ENCODE measurements at regions of chr1 and their contacts with region 1.

Region 1: GRCh38 chr1:246506674-246507481 is at the start of gene SMYD3:
- DNase-seq: peak; percentile 56 to 92 (median 75)
- ATAC-seq: peak; percentile 88
- H3K4me3 ChIP-seq: peak within 1 kb of the TSS; percentile 77 to 92
- H3K4me3 Mint-ChIP-seq: peak within 1 kb of the TSS; percentile 88
- H3K27ac ChIP-seq: peak within 1 kb of the TSS; percentile 56 to 59
- H3K27ac Mint-ChIP-seq: peak within 1 kb of the TSS; percentile 85
- H3K4me1 ChIP-seq: peaks cover 13% of the 10 kb centered on the region
- H3K4me1 Mint-ChIP-seq: peaks cover 35% of the 10 kb centered on the region
- H3K27me3 ChIP-seq: no peaks in the 10 kb centered on the region
- H3K27me3 Mint-ChIP-seq: no peaks in the 10 kb centered on the region
- CTCF ChIP-seq: no peak
- total RNA-seq, gene SMYD3: 20.5 to 21.2 TPM

Region 2: GRCh38 chr1:246117066-246117791 is 389.6 kb before region 1 on chr1:
- CTCF ChIA-PET with region 1: no interaction called
- POLR2A ChIA-PET with region 1: no interaction called
- intact Hi-C with region 1: loop called in 1 of 2 experiments (anchors 5 kb)
- DNase-seq: peak; percentile 9 to 77 (median 42)
- ATAC-seq: peak; percentile 91
- H3K4me3 ChIP-seq: no peak overlapping the region
- H3K4me3 Mint-ChIP-seq: peak overlapping the region; percentile 56
- H3K27ac ChIP-seq: peak overlapping the region in 1 of 2 experiments; percentile 41
- H3K27ac Mint-ChIP-seq: peak overlapping the region; percentile 82
- H3K4me1 ChIP-seq: peaks cover 14% of the 10 kb centered on the region
- H3K4me1 Mint-ChIP-seq: peaks cover 32% of the 10 kb centered on the region
- H3K27me3 ChIP-seq: no peaks in the 10 kb centered on the region
- H3K27me3 Mint-ChIP-seq: no peaks in the 10 kb centered on the region
- CTCF ChIP-seq: peak; percentile 52

Region 3: GRCh38 chr1:246724016-246724730 is 217.3 kb after region 1 on chr1 and contains the start of gene SCCPDH:
- CTCF ChIA-PET with region 1: no interaction called
- POLR2A ChIA-PET with region 1: no interaction called
- intact Hi-C with region 1: loop called in 1 of 2 experiments (anchors 1 kb)
- DNase-seq: peak; percentile 39 to 83 (median 70)
- ATAC-seq: peak; percentile 95
- H3K4me3 ChIP-seq: peak within 1 kb of the TSS; percentile 69 to 79
- H3K4me3 Mint-ChIP-seq: peak within 1 kb of the TSS; percentile 93
- H3K27ac ChIP-seq: peak within 1 kb of the TSS in 1 of 2 experiments; percentile 58
- H3K27ac Mint-ChIP-seq: peak within 1 kb of the TSS; percentile 90
- H3K4me1 ChIP-seq: no peaks in the 10 kb centered on the region
- H3K4me1 Mint-ChIP-seq: peaks cover 16% of the 10 kb centered on the region
- H3K27me3 ChIP-seq: no peaks in the 10 kb centered on the region
- H3K27me3 Mint-ChIP-seq: no peaks in the 10 kb centered on the region
- CTCF ChIP-seq: no peak
- total RNA-seq, gene SCCPDH: 5.4 to 6.0 TPM